CD8-positive, alpha-beta T cell (primary cell): ENCODE measurements at regions of chr15 and their contacts with region 1.

Region 1: DNA sequence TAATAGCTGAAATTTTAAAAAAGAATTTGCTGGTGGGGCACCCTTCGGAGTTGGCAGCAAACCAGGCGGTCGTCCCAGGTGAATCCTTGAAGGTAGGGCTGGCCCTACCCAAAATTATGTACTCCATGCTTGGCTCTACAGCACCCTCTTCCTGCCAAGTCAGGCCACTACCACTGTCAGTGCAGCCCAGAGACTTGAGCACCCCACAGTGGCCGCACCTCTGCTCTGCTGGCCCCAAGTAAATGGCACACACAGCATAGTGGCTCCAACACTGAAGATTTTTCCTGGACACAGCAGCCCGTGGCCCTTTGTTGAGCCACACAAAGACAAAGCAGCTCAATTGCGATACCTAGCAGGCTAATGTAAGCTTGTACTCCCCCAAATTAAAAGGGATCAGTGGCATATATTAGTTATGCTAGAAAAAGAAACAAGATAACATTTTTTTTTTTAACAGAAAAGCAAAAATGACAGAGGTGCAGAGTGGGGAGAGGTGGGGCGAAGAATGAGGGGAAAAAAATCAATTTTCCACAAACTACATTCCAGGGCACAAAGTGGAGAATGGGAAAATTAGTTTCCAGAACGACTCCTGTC is 250.5 kb downstream of the UACA start:
- DNase-seq: peak in 7 of 9 experiments; percentile 26 to 78 (median 54)
- ATAC-seq: peak; percentile 94
- H3K4me3 ChIP-seq: no peak overlapping the region
- H3K4me3 Mint-ChIP-seq: no peak overlapping the region
- H3K27ac ChIP-seq: no peak overlapping the region
- H3K27ac Mint-ChIP-seq: no peak overlapping the region
- H3K4me1 ChIP-seq: peaks cover 10% of the 10 kb centered on the region
- H3K4me1 Mint-ChIP-seq: peaks cover 19% of the 10 kb centered on the region
- H3K27me3 ChIP-seq: no peaks in the 10 kb centered on the region
- H3K27me3 Mint-ChIP-seq: no peaks in the 10 kb centered on the region
- CTCF ChIP-seq: peak; percentile 70

Region 2: GRCh38 chr15:70584838-70585706 is 72.2 kb after region 1 on chr15:
- CTCF ChIA-PET with region 1: interaction called, 4 read pairs
- POLR2A ChIA-PET with region 1: no interaction called
- intact Hi-C with region 1: loop called in 1 of 2 experiments (anchors 5 kb)
- DNase-seq: peak; percentile 25 to 70 (median 59)
- ATAC-seq: peak; percentile 82
- H3K4me3 ChIP-seq: peak overlapping the region in 1 of 2 experiments; percentile 33
- H3K4me3 Mint-ChIP-seq: peak overlapping the region; percentile 53
- H3K27ac ChIP-seq: no peak overlapping the region
- H3K27ac Mint-ChIP-seq: no peak overlapping the region
- H3K4me1 ChIP-seq: peaks cover 12% of the 10 kb centered on the region
- H3K4me1 Mint-ChIP-seq: peaks cover 10% of the 10 kb centered on the region
- H3K27me3 ChIP-seq: peaks cover 0 to 7% of the 10 kb centered on the region in 2 experiments
- H3K27me3 Mint-ChIP-seq: peaks cover 20% of the 10 kb centered on the region
- CTCF ChIP-seq: peak; percentile 69